HAP-1 (cell line): ENCODE measurements at regions of chr6 and their contacts with region 1.

Region 1: DNA sequence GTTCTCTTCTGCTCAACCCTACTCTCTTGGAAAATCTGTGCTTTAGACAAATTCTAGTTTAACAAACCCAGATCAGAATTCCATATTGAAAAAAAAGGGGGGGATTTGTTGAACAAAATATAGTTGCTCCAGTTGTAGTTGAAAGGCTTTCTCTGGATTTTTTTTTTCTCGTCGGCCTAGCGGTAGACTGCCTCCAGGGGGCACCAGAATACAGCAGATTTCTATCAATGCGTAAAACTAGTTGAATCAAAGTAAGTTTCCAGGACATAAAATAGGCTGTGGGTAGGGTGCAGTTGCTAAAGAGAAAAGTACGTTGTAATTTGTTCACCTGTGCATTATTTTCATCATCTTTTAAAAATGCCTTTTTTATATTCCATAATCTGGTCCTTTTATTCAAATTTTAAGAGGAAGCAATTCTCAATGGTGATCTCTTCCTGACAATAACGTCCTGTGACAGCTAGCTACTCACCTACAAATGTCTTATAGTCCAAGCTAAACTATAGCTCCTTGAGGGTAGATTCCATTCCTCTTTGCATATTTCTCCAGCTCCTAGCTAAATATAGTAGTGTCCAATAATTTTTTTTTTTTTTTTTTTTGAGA is 105.4 kb downstream of the PERP start:
- DNase-seq: peak; percentile 39 to 73
- H3K4me3 ChIP-seq: no peak overlapping the region
- H3K4me1 ChIP-seq: no peaks in the 10 kb centered on the region
- H3K27me3 ChIP-seq: no peaks in the 10 kb centered on the region

Region 2: GRCh38 chr6:137707590-137708360 is 294.1 kb before region 1 on chr6:
- in situ Hi-C with region 1: loop called (anchors 10 kb)
- DNase-seq: peak; percentile 68 to 69
- H3K4me3 ChIP-seq: no peak overlapping the region
- H3K4me1 ChIP-seq: no peaks in the 10 kb centered on the region
- H3K27me3 ChIP-seq: peaks cover 22% of the 10 kb centered on the region

Region 3: GRCh38 chr6:137927777-137928218 is 74.1 kb before region 1 on chr6:
- in situ Hi-C with region 1: no loop called
- DNase-seq: no peak
- H3K4me3 ChIP-seq: no peak overlapping the region
- H3K4me1 ChIP-seq: no peaks in the 10 kb centered on the region
- H3K27me3 ChIP-seq: no peaks in the 10 kb centered on the region

Region 4: DNA sequence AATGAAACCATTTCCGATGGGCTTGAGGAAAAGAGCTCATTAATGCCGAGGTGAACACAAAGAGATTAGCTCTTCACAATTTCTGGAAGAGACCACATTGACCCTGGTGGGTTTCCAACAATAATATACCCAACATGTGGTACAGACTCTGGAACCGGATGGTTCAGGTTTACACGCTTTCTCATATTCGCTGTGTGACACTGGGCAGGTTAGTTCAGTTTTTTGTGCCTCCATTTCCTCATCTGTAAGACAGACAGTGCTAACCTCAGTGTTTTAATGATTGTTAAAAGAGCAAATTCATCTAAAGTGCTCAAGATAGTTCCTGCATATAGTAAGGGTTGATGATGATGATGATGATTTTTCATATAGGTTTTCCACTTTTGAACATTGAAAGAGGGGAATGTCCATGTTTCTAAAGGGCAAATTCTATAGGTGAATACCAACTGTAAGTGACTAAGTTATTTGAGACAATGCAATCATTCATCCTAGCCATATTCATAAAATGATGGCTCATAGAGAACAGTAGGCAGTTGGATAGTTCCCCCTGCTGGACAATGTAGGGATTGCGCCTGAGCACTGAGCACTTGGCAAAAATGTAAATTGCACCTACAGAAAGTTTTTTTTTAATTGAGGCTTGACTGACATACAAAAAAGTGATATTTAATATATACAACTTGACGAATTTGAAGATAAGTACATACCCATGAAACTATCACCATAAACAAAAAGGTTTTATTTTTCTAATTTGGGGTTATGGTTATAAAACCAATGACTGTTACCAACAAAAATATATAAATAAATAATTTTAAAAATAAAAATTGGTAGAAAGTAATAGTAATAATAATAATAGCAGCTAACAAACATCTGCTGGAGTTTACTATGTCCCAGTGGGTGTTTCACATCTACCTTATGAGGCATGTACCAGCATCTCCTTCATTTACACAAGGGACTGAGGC is 107.5 kb after region 1 on chr6:
- in situ Hi-C with region 1: loop called (anchors 5 kb)
- DNase-seq: peak; percentile 47 to 85
- H3K4me3 ChIP-seq: no peak overlapping the region
- H3K4me1 ChIP-seq: peaks cover 17% of the 10 kb centered on the region
- H3K27me3 ChIP-seq: no peaks in the 10 kb centered on the region; the same call in 1 of the 2 replicates

Region 5: GRCh38 chr6:138297761-138298298 is 296.0 kb after region 1 on chr6:
- in situ Hi-C with region 1: no loop called
- DNase-seq: no peak
- H3K4me3 ChIP-seq: no peak overlapping the region
- H3K4me1 ChIP-seq: no peaks in the 10 kb centered on the region
- H3K27me3 ChIP-seq: no peaks in the 10 kb centered on the region